Activated T-helper 1 cell treated with anti-CD3 and anti-CD28 coated beads, Interleukin-12 subunit alpha, Interleukin-12 subunit beta, Interleukin-2, Interleukin-4 antibody, amounts not matched to agents 30 ng/mL and 10 ng/mL and 1 ng/mL, durations not matched to agents 14 hours and 24 hours and 36 hours (primary cell): ENCODE measurements at regions of chr18 and their contacts with region 1.

Region 1: GRCh38 chr18:3447895-3448837 is 1.8 kb upstream of the TGIF1 start:
- DNase-seq: peak; percentile 81
- H3K4me3 Mint-ChIP-seq: peak overlapping the region; percentile 97
- H3K27ac Mint-ChIP-seq: peak overlapping the region; percentile 100
- H3K4me1 Mint-ChIP-seq: peaks cover 44% of the 10 kb centered on the region
- H3K27me3 Mint-ChIP-seq: peaks cover 2% of the 10 kb centered on the region

Region 2: GRCh38 chr18:2655178-2655953 is 792.8 kb before region 1 on chr18 and contains the start of gene SMCHD1:
- intact Hi-C with region 1: loop called (anchors 5 kb)
- DNase-seq: peak; percentile 86
- H3K4me3 Mint-ChIP-seq: peak within 1 kb of the TSS; percentile 88
- H3K27ac Mint-ChIP-seq: peak within 1 kb of the TSS; percentile 96
- H3K4me1 Mint-ChIP-seq: peaks cover 36% of the 10 kb centered on the region
- H3K27me3 Mint-ChIP-seq: peaks cover 2% of the 10 kb centered on the region
- total RNA-seq, gene SMCHD1: 98.6 and 112 TPM in 2 replicates

Region 3: GRCh38 chr18:2797951-2798350 is 650.2 kb before region 1 on chr18:
- intact Hi-C with region 1: no loop called
- DNase-seq: no peak
- H3K4me3 Mint-ChIP-seq: no peak overlapping the region
- H3K27ac Mint-ChIP-seq: no peak overlapping the region
- H3K4me1 Mint-ChIP-seq: peaks cover 6% of the 10 kb centered on the region
- H3K27me3 Mint-ChIP-seq: no peaks in the 10 kb centered on the region

Region 4: GRCh38 chr18:3062798-3063680 is 385.1 kb before region 1 on chr18:
- intact Hi-C with region 1: loop called (anchors 2 kb)
- DNase-seq: peak; percentile 64
- H3K4me3 Mint-ChIP-seq: peak overlapping the region; percentile 66
- H3K27ac Mint-ChIP-seq: peak overlapping the region; percentile 99
- H3K4me1 Mint-ChIP-seq: peaks cover 67% of the 10 kb centered on the region
- H3K27me3 Mint-ChIP-seq: no peaks in the 10 kb centered on the region

Region 5: GRCh38 chr18:3297025-3297984 is 150.9 kb before region 1 on chr18:
- intact Hi-C with region 1: loop called (anchors 1 kb)
- DNase-seq: peak; percentile 89
- H3K4me3 Mint-ChIP-seq: peak overlapping the region; percentile 91
- H3K27ac Mint-ChIP-seq: peak overlapping the region; percentile 82
- H3K4me1 Mint-ChIP-seq: peaks cover 15% of the 10 kb centered on the region
- H3K27me3 Mint-ChIP-seq: peaks cover 33% of the 10 kb centered on the region

Region 6: GRCh38 chr18:3380384-3380961 is 67.7 kb before region 1 on chr18:
- intact Hi-C with region 1: loop called (anchors 2 kb)
- DNase-seq: no peak
- H3K4me3 Mint-ChIP-seq: no peak overlapping the region
- H3K27ac Mint-ChIP-seq: no peak overlapping the region
- H3K4me1 Mint-ChIP-seq: peaks cover 7% of the 10 kb centered on the region
- H3K27me3 Mint-ChIP-seq: no peaks in the 10 kb centered on the region

Region 7: GRCh38 chr18:3604498-3605408 is 156.6 kb after region 1 on chr18:
- intact Hi-C with region 1: loop called (anchors 1 kb)
- DNase-seq: peak; percentile 38
- H3K4me3 Mint-ChIP-seq: no peak overlapping the region
- H3K27ac Mint-ChIP-seq: no peak overlapping the region
- H3K4me1 Mint-ChIP-seq: peaks cover 19% of the 10 kb centered on the region
- H3K27me3 Mint-ChIP-seq: no peaks in the 10 kb centered on the region

Region 8: DNA sequence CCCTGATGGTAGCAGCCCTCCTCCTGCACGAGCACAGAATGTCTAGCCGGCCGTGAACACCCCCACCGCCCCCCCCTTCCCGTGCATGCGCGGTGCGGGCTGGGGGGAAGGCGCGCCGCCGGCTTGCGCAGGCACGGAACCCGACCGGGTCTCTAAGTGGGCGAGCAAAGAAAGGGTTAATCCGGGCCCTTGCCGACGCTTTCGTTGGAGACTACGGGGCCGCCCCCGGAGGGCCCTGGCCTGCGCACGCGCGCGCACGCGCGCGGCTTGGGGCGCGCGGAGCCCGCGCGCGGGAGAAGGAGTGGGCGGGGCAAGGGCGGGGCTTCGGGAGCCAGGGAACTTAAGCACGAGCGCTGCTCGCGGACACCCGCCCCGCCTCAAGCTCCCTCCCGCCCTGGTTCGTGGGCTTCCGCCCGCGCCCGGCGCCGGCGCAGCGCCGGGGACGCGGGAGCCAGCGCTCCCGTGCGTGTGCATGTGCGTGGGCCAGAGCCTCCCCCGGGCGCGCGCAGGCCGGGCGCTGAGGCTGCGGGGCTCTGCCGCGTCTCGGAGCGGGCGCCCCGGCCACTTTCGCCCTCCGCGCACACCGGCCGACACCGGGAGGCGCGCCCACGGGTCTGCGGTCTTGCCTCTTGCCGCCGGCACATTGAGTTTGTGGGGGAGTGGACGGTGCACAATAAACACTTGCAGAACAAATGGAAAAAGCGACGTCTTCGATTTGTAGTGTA is 1848.0 kb after region 1 on chr18:
- intact Hi-C with region 1: loop called (anchors 5 kb)
- DNase-seq: peak; percentile 91
- H3K4me3 Mint-ChIP-seq: peak overlapping the region; percentile 94
- H3K27ac Mint-ChIP-seq: peak overlapping the region; percentile 98
- H3K4me1 Mint-ChIP-seq: peaks cover 34% of the 10 kb centered on the region
- H3K27me3 Mint-ChIP-seq: peaks cover 16% of the 10 kb centered on the region